ENCODE measurements at regions of chr2 and their contacts with region 1.

Region 1: DNA sequence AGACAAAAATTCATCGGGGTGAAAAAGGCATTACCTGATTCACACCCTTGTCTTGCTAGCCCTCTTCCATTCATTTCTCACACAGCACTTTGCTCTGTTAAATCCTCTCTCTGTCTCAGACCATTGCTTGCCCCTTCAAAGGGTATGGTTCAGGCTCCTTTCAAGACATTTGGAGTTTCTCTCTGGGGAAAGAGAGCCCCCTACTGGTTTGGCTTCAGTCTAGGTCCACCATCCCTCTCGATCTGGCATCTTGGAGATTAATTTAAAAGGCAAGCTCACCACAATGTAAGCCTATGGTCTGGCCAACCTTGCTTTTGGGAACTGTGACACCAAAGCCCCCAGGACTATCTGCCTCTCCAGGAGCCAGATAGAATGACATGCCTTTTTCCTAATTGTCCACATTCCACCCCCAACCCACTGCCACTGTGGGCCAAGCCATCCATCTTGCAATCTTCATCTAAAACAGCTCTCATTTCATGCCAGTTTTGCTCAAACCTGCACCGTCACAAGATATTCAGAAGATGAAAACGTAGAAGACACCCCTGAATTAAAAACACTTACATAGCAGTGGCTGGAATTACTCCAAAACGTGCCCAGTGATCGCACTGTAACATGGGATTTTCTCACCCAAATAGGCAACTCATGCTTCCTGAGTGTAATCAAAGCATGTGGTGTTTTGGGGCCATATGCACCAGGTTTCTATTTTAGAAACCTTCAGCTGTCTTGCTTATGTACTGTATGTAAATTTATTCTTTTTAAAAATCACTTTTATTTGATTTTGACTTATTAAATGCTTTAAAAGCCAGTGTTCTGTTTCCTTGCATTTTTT is 93.9 kb downstream of the FARSB start:
- DNase-seq: peak; percentile 41
- ATAC-seq: peak; percentile 66
- H3K4me3 ChIP-seq: no peak overlapping the region
- H3K27ac ChIP-seq: no peak overlapping the region
- H3K4me1 ChIP-seq: no peaks in the 10 kb centered on the region
- H3K27me3 ChIP-seq: no peaks in the 10 kb centered on the region
- CTCF ChIP-seq: peak; percentile 74
- EP300 ChIP-seq: no peak
- POLR2A ChIP-seq: no peak
- RAD21 ChIP-seq: peak; percentile 57

Region 2: GRCh38 chr2:222057347-222058073 is 504.5 kb before region 1 on chr2:
- CTCF ChIA-PET with region 1: interaction called, 6 read pairs
- POLR2A ChIA-PET with region 1: no interaction called
- in situ Hi-C with region 1: loop called (anchors 5 kb)
- intact Hi-C with region 1: loop called (anchors 1 kb)
- DNase-seq: no peak
- ATAC-seq: peak; percentile 50; the same call in 2 of the 3 replicates
- H3K4me3 ChIP-seq: no peak overlapping the region
- H3K27ac ChIP-seq: no peak overlapping the region
- H3K4me1 ChIP-seq: no peaks in the 10 kb centered on the region
- H3K27me3 ChIP-seq: peaks cover 0 to 17% of the 10 kb centered on the region in 2 experiments; a peak in 2 of 5 replicates
- CTCF ChIP-seq: peak; percentile 70
- EP300 ChIP-seq: no peak
- POLR2A ChIP-seq: no peak
- RAD21 ChIP-seq: peak; percentile 22; the same call in 1 of the 2 replicates

Region 3: GRCh38 chr2:222311978-222312738 is 249.9 kb before region 1 on chr2:
- CTCF ChIA-PET with region 1: no interaction called
- POLR2A ChIA-PET with region 1: no interaction called
- in situ Hi-C with region 1: loop called (anchors 5 kb)
- intact Hi-C with region 1: no loop called
- DNase-seq: no peak
- ATAC-seq: peak; percentile 48
- H3K4me3 ChIP-seq: no peak overlapping the region
- H3K27ac ChIP-seq: no peak overlapping the region
- H3K4me1 ChIP-seq: no peaks in the 10 kb centered on the region
- H3K27me3 ChIP-seq: peaks cover 6 to 73% of the 10 kb centered on the region in 2 experiments; a peak in 4 of 5 replicates
- CTCF ChIP-seq: no peak
- EP300 ChIP-seq: no peak
- POLR2A ChIP-seq: no peak
- RAD21 ChIP-seq: no peak

Region 4: GRCh38 chr2:222318026-222318711 is 243.9 kb before region 1 on chr2:
- CTCF ChIA-PET with region 1: no interaction called
- POLR2A ChIA-PET with region 1: no interaction called
- in situ Hi-C with region 1: loop called (anchors 5 kb)
- intact Hi-C with region 1: loop called (anchors 2 kb)
- DNase-seq: peak; percentile 53
- ATAC-seq: peak; percentile 94
- H3K4me3 ChIP-seq: peak overlapping the region; percentile 55 to 75 (median 61)
- H3K27ac ChIP-seq: no peak overlapping the region
- H3K4me1 ChIP-seq: peaks cover 15% of the 10 kb centered on the region
- H3K27me3 ChIP-seq: peaks cover 12 to 48% of the 10 kb centered on the region in 2 experiments
- CTCF ChIP-seq: peak; percentile 63
- EP300 ChIP-seq: no peak
- POLR2A ChIP-seq: no peak
- RAD21 ChIP-seq: peak; percentile 64